Transverse colon (tissue), 4 donors: ENCODE measurements at regions of chr17 and their contacts with region 1.

Region 1: GRCh38 chr17:53959876-53960275 is 137.1 kb downstream of the KIF2B start:
- DNase-seq: no peak
- H3K4me3 ChIP-seq: no peak overlapping the region
- H3K27ac ChIP-seq: no peak overlapping the region
- H3K4me1 ChIP-seq: no peaks in the 10 kb centered on the region
- H3K27me3 ChIP-seq: no peaks in the 10 kb centered on the region
- CTCF ChIP-seq: no peak
- EP300 ChIP-seq: no peak
- POLR2A ChIP-seq: no peak

Region 2: GRCh38 chr17:52841971-52842370 is 1117.9 kb before region 1 on chr17:
- in situ Hi-C with region 1: no loop called
- intact Hi-C with region 1: loop called (anchors 5 kb)
- DNase-seq: no peak
- H3K4me3 ChIP-seq: no peak overlapping the region
- H3K27ac ChIP-seq: no peak overlapping the region
- H3K4me1 ChIP-seq: no peaks in the 10 kb centered on the region
- H3K27me3 ChIP-seq: no peaks in the 10 kb centered on the region
- CTCF ChIP-seq: no peak
- EP300 ChIP-seq: no peak
- POLR2A ChIP-seq: no peak

Region 3: GRCh38 chr17:53818271-53818670 is 141.6 kb before region 1 on chr17:
- in situ Hi-C with region 1: no loop called
- intact Hi-C with region 1: no loop called
- DNase-seq: no peak
- H3K4me3 ChIP-seq: no peak overlapping the region
- H3K27ac ChIP-seq: no peak overlapping the region
- H3K4me1 ChIP-seq: no peaks in the 10 kb centered on the region
- H3K27me3 ChIP-seq: no peaks in the 10 kb centered on the region
- CTCF ChIP-seq: no peak
- EP300 ChIP-seq: no peak
- POLR2A ChIP-seq: no peak